Calu3 (cell line): ENCODE measurements at regions of chr7 and their contacts with region 1.

Region 1: GRCh38 chr7:108002726-108003598 is at the start of gene LAMB1:
- DNase-seq: peak; percentile 79
- H3K4me3 Mint-ChIP-seq: peak within 1 kb of the TSS; percentile 90
- H3K27ac Mint-ChIP-seq: peak within 1 kb of the TSS; percentile 86
- H3K4me1 Mint-ChIP-seq: peaks cover 52% of the 10 kb centered on the region
- H3K27me3 Mint-ChIP-seq: no peaks in the 10 kb centered on the region
- CTCF ChIP-seq: no peak
- total RNA-seq, gene LAMB1: 181 and 240 TPM in 2 replicates

Region 2: DNA sequence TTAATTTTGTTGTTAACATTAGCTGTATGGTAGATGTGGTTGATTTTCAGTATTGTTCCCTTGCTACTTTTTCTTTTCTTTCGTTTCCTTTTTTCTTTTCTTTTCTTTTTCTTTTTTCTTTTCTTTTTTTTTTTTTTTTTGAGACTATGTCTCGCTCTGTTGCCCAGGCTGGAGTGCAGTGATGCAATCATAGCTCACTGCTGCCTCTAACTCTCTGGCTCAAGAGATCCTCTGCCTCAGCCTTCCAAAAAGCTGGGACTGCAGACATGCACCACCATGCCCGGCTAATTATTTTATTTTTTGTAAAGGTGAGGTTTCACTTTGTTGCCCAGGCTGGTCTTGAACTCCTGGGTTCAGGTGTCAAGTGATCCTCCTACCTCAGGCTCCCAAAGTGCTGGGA is 214.3 kb before region 1 on chr7:
- CTCF ChIA-PET with region 1: no interaction called
- intact Hi-C with region 1: no loop called
- DNase-seq: no peak
- H3K4me3 Mint-ChIP-seq: no peak overlapping the region
- H3K27ac Mint-ChIP-seq: no peak overlapping the region
- H3K4me1 Mint-ChIP-seq: no peaks in the 10 kb centered on the region
- H3K27me3 Mint-ChIP-seq: peaks cover 37% of the 10 kb centered on the region
- CTCF ChIP-seq: no peak

Region 3: DNA sequence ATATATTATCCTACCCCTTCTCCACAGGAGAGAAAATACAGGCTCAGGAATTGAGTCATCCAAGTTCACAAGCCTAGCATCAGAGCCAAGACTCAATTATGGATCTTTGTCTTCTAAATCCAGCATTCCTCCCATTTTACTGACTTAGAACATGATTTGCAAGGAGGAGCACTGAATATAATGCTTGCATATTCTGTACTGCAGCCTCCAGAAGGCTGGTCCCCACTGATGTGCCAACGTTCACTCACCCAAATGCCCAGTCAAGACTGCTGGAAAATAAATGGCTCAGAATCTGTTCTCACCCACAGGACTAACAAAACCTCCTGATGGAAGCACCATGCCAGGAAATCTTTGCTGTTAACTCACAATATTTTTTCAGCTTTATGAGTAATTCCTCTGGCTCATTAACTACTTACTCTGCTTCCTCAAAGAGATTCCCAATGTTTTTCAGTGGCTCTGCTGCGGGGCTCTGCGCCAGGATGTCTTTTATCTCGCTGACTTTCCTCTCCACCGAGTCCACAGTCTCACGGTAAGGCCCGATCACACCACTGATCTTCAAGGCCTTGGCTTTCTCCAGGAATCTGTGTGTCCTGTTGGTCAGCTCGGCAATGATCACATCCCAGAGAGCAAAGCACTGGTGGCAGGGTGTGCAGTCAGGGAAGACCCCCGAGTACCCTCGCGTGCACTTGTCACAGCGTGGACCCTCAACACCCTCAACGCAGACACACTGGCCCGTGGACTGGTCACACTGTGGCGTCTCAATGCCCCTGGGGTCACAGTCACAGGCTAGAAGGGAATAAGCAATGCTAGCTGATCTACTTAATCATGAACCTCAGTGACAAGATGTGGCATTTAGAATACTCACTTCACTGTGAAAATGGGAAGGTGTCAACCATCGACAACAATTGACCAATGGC is 63.1 kb before region 1 on chr7:
- CTCF ChIA-PET with region 1: no interaction called
- intact Hi-C with region 1: no loop called
- DNase-seq: no peak
- H3K4me3 Mint-ChIP-seq: no peak overlapping the region
- H3K27ac Mint-ChIP-seq: no peak overlapping the region
- H3K4me1 Mint-ChIP-seq: no peaks in the 10 kb centered on the region
- H3K27me3 Mint-ChIP-seq: no peaks in the 10 kb centered on the region
- CTCF ChIP-seq: no peak

Region 4: GRCh38 chr7:108016841-108017775 is 14.1 kb after region 1 on chr7:
- CTCF ChIA-PET with region 1: interaction called, 4 read pairs
- intact Hi-C with region 1: loop called (anchors 2 kb)
- DNase-seq: no peak
- H3K4me3 Mint-ChIP-seq: no peak overlapping the region
- H3K27ac Mint-ChIP-seq: no peak overlapping the region
- H3K4me1 Mint-ChIP-seq: peaks cover 22% of the 10 kb centered on the region
- H3K27me3 Mint-ChIP-seq: no peaks in the 10 kb centered on the region
- CTCF ChIP-seq: peak; percentile 34

Region 5: GRCh38 chr7:109003742-109004141 is 1000.8 kb after region 1 on chr7:
- CTCF ChIA-PET with region 1: no interaction called
- intact Hi-C with region 1: no loop called
- DNase-seq: no peak
- H3K4me3 Mint-ChIP-seq: no peak overlapping the region
- H3K27ac Mint-ChIP-seq: no peak overlapping the region
- H3K4me1 Mint-ChIP-seq: no peaks in the 10 kb centered on the region
- H3K27me3 Mint-ChIP-seq: no peaks in the 10 kb centered on the region
- CTCF ChIP-seq: no peak